PC-3 (cell line): ENCODE measurements at regions of chrX and their contacts with region 1.

Region 1: DNA sequence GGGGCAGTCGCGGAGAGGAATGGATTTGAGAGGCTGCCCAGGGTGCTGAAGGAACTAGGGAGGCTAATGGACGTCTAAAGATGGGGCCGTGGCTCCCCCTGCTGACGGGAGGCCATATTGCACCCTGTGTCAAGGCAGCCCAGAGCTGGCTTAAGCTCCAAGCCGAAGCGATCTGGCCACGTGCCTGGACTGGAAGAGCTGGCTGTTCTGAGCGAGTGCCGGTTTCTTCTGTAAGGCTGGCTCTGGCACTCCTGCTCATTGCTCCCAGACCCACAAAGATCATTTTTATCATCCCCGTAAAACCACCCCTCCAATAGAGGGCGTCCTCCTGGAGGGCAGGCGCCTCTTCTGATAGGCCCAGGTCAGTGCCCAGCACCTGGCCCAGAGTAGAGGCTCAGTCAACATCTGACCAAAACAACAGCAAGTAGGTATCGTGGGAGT is 5.6 kb downstream of the PNCK start:
- DNase-seq: peak; percentile 82
- ATAC-seq: peak; percentile 87
- H3K4me3 ChIP-seq: peak overlapping the region; percentile 41; the same call in 1 of the 2 replicates
- H3K27ac ChIP-seq: no peak overlapping the region
- H3K4me1 ChIP-seq: no peaks in the 10 kb centered on the region
- H3K27me3 ChIP-seq: no peaks in the 10 kb centered on the region
- CTCF ChIP-seq: peak; percentile 93

Region 2: GRCh38 chrX:153539171-153539978 is 128.6 kb before region 1 on chrX:
- CTCF ChIA-PET with region 1: interaction called, 7 read pairs
- POLR2A ChIA-PET with region 1: no interaction called
- intact Hi-C with region 1: loop called (anchors 5 kb)
- DNase-seq: peak; percentile 73
- ATAC-seq: peak; percentile 97
- H3K4me3 ChIP-seq: no peak overlapping the region
- H3K27ac ChIP-seq: no peak overlapping the region
- H3K4me1 ChIP-seq: no peaks in the 10 kb centered on the region
- H3K27me3 ChIP-seq: peaks cover 13% of the 10 kb centered on the region; the same call in 1 of the 2 replicates
- CTCF ChIP-seq: peak; percentile 89

Region 3: GRCh38 chrX:153554519-153555167 is 113.3 kb before region 1 on chrX:
- CTCF ChIA-PET with region 1: interaction called, 5 read pairs
- POLR2A ChIA-PET with region 1: no interaction called
- intact Hi-C with region 1: loop called (anchors 1 kb)
- DNase-seq: peak; percentile 61
- ATAC-seq: peak; percentile 92
- H3K4me3 ChIP-seq: no peak overlapping the region
- H3K27ac ChIP-seq: no peak overlapping the region
- H3K4me1 ChIP-seq: no peaks in the 10 kb centered on the region
- H3K27me3 ChIP-seq: no peaks in the 10 kb centered on the region
- CTCF ChIP-seq: peak; percentile 76

Region 4: GRCh38 chrX:153609917-153610428 is 58.0 kb before region 1 on chrX:
- CTCF ChIA-PET with region 1: interaction called, 6 read pairs
- POLR2A ChIA-PET with region 1: no interaction called
- intact Hi-C with region 1: loop called (anchors 2 kb)
- DNase-seq: peak; percentile 67
- ATAC-seq: peak; percentile 94
- H3K4me3 ChIP-seq: peak overlapping the region; percentile 40; the same call in 1 of the 2 replicates
- H3K27ac ChIP-seq: no peak overlapping the region
- H3K4me1 ChIP-seq: no peaks in the 10 kb centered on the region
- H3K27me3 ChIP-seq: peaks cover 27% of the 10 kb centered on the region
- CTCF ChIP-seq: peak; percentile 72

Region 5: DNA sequence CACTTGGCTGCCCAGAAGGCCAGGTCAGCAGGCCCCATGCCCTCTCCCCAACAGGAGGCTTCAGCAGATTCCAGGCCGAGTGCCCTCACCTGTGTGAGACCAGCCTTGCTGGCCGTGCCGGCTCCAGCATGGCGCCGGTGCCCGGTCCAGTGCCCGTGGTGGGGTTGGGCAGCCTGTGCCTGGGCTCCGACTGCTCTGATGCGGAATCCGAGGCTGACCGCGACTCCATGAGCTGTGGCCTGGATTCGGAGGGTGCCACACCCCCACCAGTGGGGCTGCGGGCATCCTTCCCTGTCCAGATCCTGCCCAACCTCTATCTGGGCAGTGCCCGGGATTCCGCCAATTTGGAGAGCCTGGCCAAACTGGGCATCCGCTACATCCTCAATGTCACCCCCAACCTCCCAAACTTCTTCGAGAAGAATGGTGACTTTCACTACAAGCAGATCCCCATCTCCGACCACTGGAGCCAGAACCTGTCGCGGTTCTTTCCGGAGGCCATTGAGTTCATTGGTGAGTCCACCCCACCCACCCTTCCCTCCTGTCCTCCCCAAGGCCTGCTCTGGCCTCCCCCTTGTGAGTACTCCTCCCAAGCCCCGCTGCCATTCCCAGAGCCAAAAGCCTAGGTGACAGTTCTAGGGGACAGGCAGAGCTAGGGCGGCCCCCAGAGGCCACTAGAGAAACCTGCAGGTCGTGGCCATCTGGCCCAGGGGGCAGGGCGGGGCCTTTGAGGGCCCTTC is 18.6 kb before region 1 on chrX:
- CTCF ChIA-PET with region 1: interaction called, 12 read pairs
- POLR2A ChIA-PET with region 1: no interaction called
- intact Hi-C with region 1: no loop called
- DNase-seq: peak; percentile 26
- ATAC-seq: no peak
- H3K4me3 ChIP-seq: no peak overlapping the region
- H3K27ac ChIP-seq: no peak overlapping the region
- H3K4me1 ChIP-seq: no peaks in the 10 kb centered on the region
- H3K27me3 ChIP-seq: peaks cover 8% of the 10 kb centered on the region; the same call in 1 of the 2 replicates
- CTCF ChIP-seq: peak; percentile 49

Region 6: GRCh38 chrX:153900831-153901752 is 233.1 kb after region 1 on chrX:
- CTCF ChIA-PET with region 1: no interaction called
- POLR2A ChIA-PET with region 1: no interaction called
- intact Hi-C with region 1: no loop called
- DNase-seq: peak; percentile 55
- ATAC-seq: peak; percentile 73
- H3K4me3 ChIP-seq: peak overlapping the region; percentile 45; the same call in 1 of the 2 replicates
- H3K27ac ChIP-seq: no peak overlapping the region
- H3K4me1 ChIP-seq: peaks cover 9% of the 10 kb centered on the region; the same call in 1 of the 2 replicates
- H3K27me3 ChIP-seq: no peaks in the 10 kb centered on the region
- CTCF ChIP-seq: no peak